Activated naive CD8-positive, alpha-beta T cell treated with anti-CD3 and anti-CD28 coated beads, Interleukin-2, amount 10 ng/mL, durations not matched to agents 7 days and 5 days (primary cell): ENCODE measurements at regions of chr1 and their contacts with region 1.

Region 1: DNA sequence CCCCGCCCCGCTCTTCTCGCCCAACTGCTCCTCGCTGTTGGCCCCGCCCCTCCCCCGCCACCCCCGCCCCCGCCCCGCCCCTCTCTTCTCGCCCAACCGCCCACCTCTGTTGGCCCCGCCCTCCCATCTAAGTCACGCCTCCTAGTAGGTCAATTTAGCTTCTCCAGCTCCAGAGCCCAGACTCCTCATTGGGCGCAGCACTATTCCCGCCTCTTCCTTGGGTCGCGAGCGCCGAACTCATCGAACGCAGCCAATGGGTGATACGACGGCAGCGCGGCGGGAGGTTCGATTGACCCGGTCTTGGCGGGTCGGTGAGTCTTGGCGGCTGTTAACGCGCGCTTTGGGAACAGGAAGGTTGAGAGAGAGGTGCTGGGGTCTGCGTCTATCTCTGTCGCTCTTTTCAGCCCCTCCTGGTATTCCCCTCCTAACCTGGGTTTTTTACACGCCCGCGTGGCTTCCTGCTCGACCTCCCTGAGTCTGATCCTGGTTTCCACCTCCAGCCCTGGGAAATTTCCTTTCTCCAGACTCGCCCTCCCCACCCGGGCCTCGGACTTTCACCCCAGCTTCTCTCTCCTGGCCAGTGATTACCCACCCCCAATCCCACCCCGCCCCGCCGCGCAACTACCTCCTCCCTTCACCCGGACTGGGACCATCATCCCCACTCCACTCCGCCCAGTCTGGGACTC is at the start of gene RAD54L:
- DNase-seq: peak; percentile 93
- ATAC-seq: peak; percentile 92
- H3K4me3 Mint-ChIP-seq: peak within 1 kb of the TSS; percentile 96
- H3K27ac Mint-ChIP-seq: peak within 1 kb of the TSS; percentile 95
- H3K4me1 Mint-ChIP-seq: peaks cover 26% of the 10 kb centered on the region
- H3K27me3 Mint-ChIP-seq: no peaks in the 10 kb centered on the region
- total RNA-seq, gene RAD54L: 47.9 to 50.8 TPM

Region 2: GRCh38 chr1:46053734-46054133 is 193.8 kb before region 1 on chr1:
- POLR2A ChIA-PET with region 1: no interaction called
- DNase-seq: no peak
- ATAC-seq: no peak
- H3K4me3 Mint-ChIP-seq: no peak overlapping the region
- H3K27ac Mint-ChIP-seq: no peak overlapping the region
- H3K4me1 Mint-ChIP-seq: no peaks in the 10 kb centered on the region
- H3K27me3 Mint-ChIP-seq: peaks cover 11% of the 10 kb centered on the region

Region 3: GRCh38 chr1:46285730-46286477 is 38.3 kb after region 1 on chr1:
- POLR2A ChIA-PET with region 1: interaction called, 14 read pairs
- DNase-seq: peak; percentile 63
- ATAC-seq: peak; percentile 92
- H3K4me3 Mint-ChIP-seq: peak overlapping the region; percentile 25
- H3K27ac Mint-ChIP-seq: peak overlapping the region; percentile 89
- H3K4me1 Mint-ChIP-seq: peaks cover 35% of the 10 kb centered on the region
- H3K27me3 Mint-ChIP-seq: no peaks in the 10 kb centered on the region

Region 4: GRCh38 chr1:46340404-46341221 is 93.0 kb after region 1 on chr1 and contains the start of gene NSUN4:
- POLR2A ChIA-PET with region 1: interaction called, 13 read pairs
- DNase-seq: peak; percentile 86
- ATAC-seq: peak; percentile 89
- H3K4me3 Mint-ChIP-seq: peak within 1 kb of the TSS; percentile 100
- H3K27ac Mint-ChIP-seq: peak within 1 kb of the TSS; percentile 99
- H3K4me1 Mint-ChIP-seq: peaks cover 34% of the 10 kb centered on the region
- H3K27me3 Mint-ChIP-seq: no peaks in the 10 kb centered on the region
- total RNA-seq, gene NSUN4: 23.2 to 24.9 TPM